ENCODE measurements at regions of chr4 and their contacts with region 1.

Region 1: GRCh38 chr4:155795991-155796390 is 37.2 kb downstream of the GUCY1B1 start:
- DNase-seq: no peak
- H3K4me3 ChIP-seq: no peak overlapping the region
- H3K27ac ChIP-seq: no peak overlapping the region
- H3K4me1 ChIP-seq: peaks cover 0 to 2% (median 0%) of the 10 kb centered on the region in 4 experiments; a peak in 1 of 7 replicates
- H3K27me3 ChIP-seq: no peaks in the 10 kb centered on the region
- CTCF ChIP-seq: peak; percentile 6 to 72 (median 60)
- EP300 ChIP-seq: no peak
- POLR2A ChIP-seq: no peak
- RAD21 ChIP-seq: peak; percentile 30 to 44; a peak in 3 of 4 replicates

Region 2: GRCh38 chr4:155780775-155781174 is 15.2 kb before region 1 on chr4:
- CTCF ChIA-PET with region 1: interaction called, 13 read pairs
- POLR2A ChIA-PET with region 1: no interaction called
- DNase-seq: no peak
- H3K4me3 ChIP-seq: no peak overlapping the region
- H3K27ac ChIP-seq: no peak overlapping the region
- H3K4me1 ChIP-seq: 0 out of 7 replicates have a peak, but pooled peaks cover 0 to 2% (median 0%) of the 10 kb centered on the region in 4 experiments
- H3K27me3 ChIP-seq: no peaks in the 10 kb centered on the region
- CTCF ChIP-seq: no peak
- EP300 ChIP-seq: no peak
- POLR2A ChIP-seq: no peak
- RAD21 ChIP-seq: no peak

Measured in H1 (cell line).